ENCODE measurements at regions of chr10 and their contacts with region 1.

Region 1: DNA sequence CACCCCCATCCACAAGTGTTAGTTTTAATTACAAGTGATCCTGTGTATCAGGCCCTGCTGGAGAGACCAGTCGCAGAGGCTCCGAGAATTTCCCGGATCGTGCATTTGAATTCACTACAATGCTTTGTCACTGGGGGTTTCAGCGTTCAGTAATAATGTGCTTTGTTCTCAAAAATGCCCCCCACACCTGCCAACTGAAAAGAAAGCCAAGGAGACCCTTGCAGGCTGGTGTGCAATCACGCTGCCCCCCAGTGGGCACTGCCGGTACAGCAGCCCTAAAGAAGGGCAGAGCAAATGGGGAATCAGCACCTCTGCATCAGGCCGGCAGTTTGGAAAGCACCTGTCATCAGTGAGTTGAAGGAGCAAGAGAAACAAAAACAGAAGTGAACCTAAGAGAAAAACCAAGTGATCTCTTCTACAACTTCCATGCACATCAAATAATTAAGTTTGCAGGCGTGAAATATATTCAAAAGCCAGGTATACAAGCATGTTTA is 177.6 kb downstream of the PARD3 start:
- DNase-seq: peak; percentile 63 to 88
- H3K4me3 ChIP-seq: no peak overlapping the region
- H3K4me3 Mint-ChIP-seq: no peak overlapping the region
- H3K27ac Mint-ChIP-seq: no peak overlapping the region
- H3K4me1 ChIP-seq: no peaks in the 10 kb centered on the region
- H3K4me1 Mint-ChIP-seq: peaks cover 13% of the 10 kb centered on the region
- H3K27me3 ChIP-seq: no peaks in the 10 kb centered on the region
- H3K27me3 Mint-ChIP-seq: no peaks in the 10 kb centered on the region
- CTCF ChIP-seq: peak; percentile 98 to 99

Region 2: DNA sequence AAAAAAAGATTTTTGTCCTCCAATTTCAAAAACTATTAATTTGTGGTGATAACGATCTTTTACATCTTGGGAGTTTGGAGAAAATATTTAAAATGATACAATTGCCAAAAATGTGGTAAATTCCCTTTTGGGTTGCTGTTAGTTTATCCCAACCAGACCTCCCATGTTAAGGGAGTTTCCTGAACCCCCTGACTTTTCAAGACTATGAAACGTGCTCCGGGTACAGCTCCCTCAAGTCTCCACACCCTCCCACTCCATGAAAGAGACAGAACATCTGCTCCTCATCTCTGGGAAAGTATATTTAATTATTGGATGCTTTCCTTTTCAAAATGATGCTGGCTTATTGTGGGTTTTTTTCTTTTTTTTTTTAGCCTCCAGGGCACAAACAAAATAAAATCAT is 768.4 kb before region 1 on chr10:
- CTCF ChIA-PET with region 1: no interaction called
- POLR2A ChIA-PET with region 1: no interaction called
- intact Hi-C with region 1: no loop called
- DNase-seq: no peak
- H3K4me3 ChIP-seq: no peak overlapping the region
- H3K4me3 Mint-ChIP-seq: no peak overlapping the region
- H3K27ac Mint-ChIP-seq: no peak overlapping the region
- H3K4me1 ChIP-seq: no peaks in the 10 kb centered on the region
- H3K4me1 Mint-ChIP-seq: peaks cover 19% of the 10 kb centered on the region
- H3K27me3 ChIP-seq: no peaks in the 10 kb centered on the region
- H3K27me3 Mint-ChIP-seq: no peaks in the 10 kb centered on the region
- CTCF ChIP-seq: no peak

Region 3: DNA sequence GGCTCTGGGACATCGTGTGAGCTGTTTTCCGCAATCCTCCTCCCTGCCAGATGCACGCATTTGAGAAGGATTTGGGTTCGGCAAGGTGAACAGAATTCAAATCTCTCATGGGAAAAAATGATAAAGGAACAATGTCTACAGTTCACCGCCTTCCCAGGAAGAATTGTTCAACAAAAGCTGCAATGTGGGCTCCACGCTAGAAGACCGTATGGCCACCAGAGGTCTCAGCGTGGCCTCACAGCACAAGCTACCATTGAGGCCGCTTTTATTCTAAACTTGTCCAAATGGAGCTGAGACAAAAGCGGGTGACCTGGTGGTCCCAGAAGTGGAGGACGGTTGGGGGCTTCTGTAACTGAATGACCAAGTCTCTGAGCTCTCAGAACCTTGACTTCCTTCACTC is 555.5 kb before region 1 on chr10:
- CTCF ChIA-PET with region 1: no interaction called
- POLR2A ChIA-PET with region 1: no interaction called
- intact Hi-C with region 1: loop called (anchors 5 kb)
- DNase-seq: peak in 1 of 2 experiments; percentile 23
- H3K4me3 ChIP-seq: no peak overlapping the region
- H3K4me3 Mint-ChIP-seq: no peak overlapping the region
- H3K27ac Mint-ChIP-seq: no peak overlapping the region
- H3K4me1 ChIP-seq: no peaks in the 10 kb centered on the region
- H3K4me1 Mint-ChIP-seq: no peaks in the 10 kb centered on the region
- H3K27me3 ChIP-seq: no peaks in the 10 kb centered on the region
- H3K27me3 Mint-ChIP-seq: no peaks in the 10 kb centered on the region
- CTCF ChIP-seq: peak; percentile 24 to 26

Region 4: DNA sequence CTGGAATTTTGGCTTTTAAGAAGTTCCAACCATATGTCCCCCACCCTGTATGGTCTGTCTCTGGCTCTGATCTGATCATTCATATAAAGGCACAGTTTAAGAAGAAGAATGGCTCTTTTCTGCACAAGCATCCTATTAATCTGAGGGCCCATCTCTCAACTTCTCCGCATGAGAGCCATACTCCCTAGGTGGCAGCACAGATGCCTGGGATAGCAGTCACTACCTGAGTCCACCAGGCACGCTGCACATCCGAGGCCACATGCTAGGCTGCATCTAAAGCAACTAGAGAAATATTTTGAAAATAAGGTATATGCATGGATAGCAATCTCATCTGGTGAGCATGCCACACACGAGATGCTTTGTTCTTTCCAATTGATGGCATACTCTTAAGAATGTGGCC is 387.8 kb before region 1 on chr10:
- CTCF ChIA-PET with region 1: interaction called, 4 read pairs
- POLR2A ChIA-PET with region 1: no interaction called
- intact Hi-C with region 1: loop called (anchors 1 kb)
- DNase-seq: peak; percentile 62 to 67
- H3K4me3 ChIP-seq: no peak overlapping the region
- H3K4me3 Mint-ChIP-seq: no peak overlapping the region
- H3K27ac Mint-ChIP-seq: no peak overlapping the region
- H3K4me1 ChIP-seq: peaks cover 5% of the 10 kb centered on the region; the same call in 1 of the 2 replicates
- H3K4me1 Mint-ChIP-seq: peaks cover 20% of the 10 kb centered on the region
- H3K27me3 ChIP-seq: no peaks in the 10 kb centered on the region
- H3K27me3 Mint-ChIP-seq: no peaks in the 10 kb centered on the region
- CTCF ChIP-seq: peak; percentile 28 to 75

Region 5: GRCh38 chr10:34305190-34305589 is 332.3 kb before region 1 on chr10:
- CTCF ChIA-PET with region 1: no interaction called
- POLR2A ChIA-PET with region 1: no interaction called
- intact Hi-C with region 1: loop called (anchors 10 kb)
- DNase-seq: peak; percentile 90 to 92
- H3K4me3 ChIP-seq: no peak overlapping the region
- H3K4me3 Mint-ChIP-seq: no peak overlapping the region
- H3K27ac Mint-ChIP-seq: peak overlapping the region; percentile 48
- H3K4me1 ChIP-seq: no peaks in the 10 kb centered on the region; the same call in 1 of the 2 replicates
- H3K4me1 Mint-ChIP-seq: peaks cover 7% of the 10 kb centered on the region
- H3K27me3 ChIP-seq: no peaks in the 10 kb centered on the region
- H3K27me3 Mint-ChIP-seq: no peaks in the 10 kb centered on the region
- CTCF ChIP-seq: peak; percentile 58 to 84

Region 6: DNA sequence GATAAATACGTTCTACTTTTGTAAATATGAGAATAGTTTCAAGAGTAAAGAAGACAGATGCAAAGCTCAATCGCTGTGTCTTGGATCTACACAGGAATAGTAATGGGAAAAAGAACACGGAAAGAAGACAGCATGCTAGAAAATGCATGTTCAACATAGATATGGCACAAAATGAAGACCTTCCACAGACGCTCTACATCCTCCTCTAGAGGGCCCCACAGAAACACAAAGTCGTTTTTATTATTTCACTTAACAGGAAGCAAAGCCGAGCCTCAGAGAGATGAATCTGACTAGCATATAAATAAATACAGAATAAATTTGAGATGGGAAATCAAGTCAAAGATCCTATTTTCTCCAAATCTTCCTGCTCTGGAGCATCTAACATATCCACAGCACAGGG is 114.9 kb before region 1 on chr10:
- CTCF ChIA-PET with region 1: interaction called, 5 read pairs
- POLR2A ChIA-PET with region 1: no interaction called
- intact Hi-C with region 1: loop called (anchors 1 kb)
- DNase-seq: no peak
- H3K4me3 ChIP-seq: no peak overlapping the region
- H3K4me3 Mint-ChIP-seq: no peak overlapping the region
- H3K27ac Mint-ChIP-seq: no peak overlapping the region
- H3K4me1 ChIP-seq: peaks cover 16% of the 10 kb centered on the region
- H3K4me1 Mint-ChIP-seq: peaks cover 13% of the 10 kb centered on the region
- H3K27me3 ChIP-seq: no peaks in the 10 kb centered on the region
- H3K27me3 Mint-ChIP-seq: no peaks in the 10 kb centered on the region
- CTCF ChIP-seq: peak; percentile 42 to 56

Region 7: DNA sequence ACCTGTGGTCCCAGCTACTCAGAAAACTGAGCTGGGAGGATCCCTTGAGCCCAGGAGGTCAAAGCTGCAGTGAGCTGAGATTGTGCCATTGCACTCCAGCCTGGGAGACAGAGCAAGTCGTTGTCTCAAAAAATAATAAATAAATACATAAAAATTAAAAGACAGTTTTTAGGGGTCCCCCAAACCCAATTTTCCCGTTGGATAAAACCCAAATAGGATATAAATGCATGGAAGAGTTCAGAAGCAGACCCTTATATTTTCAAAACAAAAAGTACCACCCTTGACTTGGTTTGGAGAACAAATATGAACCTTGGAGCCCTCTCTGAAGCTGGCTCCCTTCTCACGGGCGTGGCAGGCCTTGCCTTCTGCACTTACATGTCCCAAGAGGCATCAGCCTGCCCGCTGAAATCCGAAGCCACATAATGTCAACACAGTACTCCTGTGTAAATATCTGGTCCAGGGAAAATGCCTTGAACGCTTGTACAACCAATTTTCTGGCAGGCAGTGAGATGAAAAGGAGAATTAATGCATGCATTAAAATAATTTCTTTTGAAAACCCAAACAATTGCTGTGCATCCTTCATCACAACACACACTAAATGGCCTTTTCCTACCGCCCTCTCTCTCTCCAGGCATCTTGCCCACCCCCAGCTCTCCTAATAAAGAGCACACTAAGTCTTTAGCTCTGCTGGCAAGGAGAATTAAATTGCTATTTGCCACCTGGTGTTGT is 224.0 kb after region 1 on chr10:
- CTCF ChIA-PET with region 1: no interaction called
- POLR2A ChIA-PET with region 1: no interaction called
- intact Hi-C with region 1: no loop called
- DNase-seq: peak; percentile 20 to 47
- H3K4me3 ChIP-seq: no peak overlapping the region
- H3K4me3 Mint-ChIP-seq: no peak overlapping the region
- H3K27ac Mint-ChIP-seq: no peak overlapping the region
- H3K4me1 ChIP-seq: peaks cover 6% of the 10 kb centered on the region
- H3K4me1 Mint-ChIP-seq: peaks cover 7% of the 10 kb centered on the region
- H3K27me3 ChIP-seq: no peaks in the 10 kb centered on the region
- H3K27me3 Mint-ChIP-seq: no peaks in the 10 kb centered on the region
- CTCF ChIP-seq: no peak